ENCODE measurements at regions of chr9 and their contacts with region 1.

Region 1: DNA sequence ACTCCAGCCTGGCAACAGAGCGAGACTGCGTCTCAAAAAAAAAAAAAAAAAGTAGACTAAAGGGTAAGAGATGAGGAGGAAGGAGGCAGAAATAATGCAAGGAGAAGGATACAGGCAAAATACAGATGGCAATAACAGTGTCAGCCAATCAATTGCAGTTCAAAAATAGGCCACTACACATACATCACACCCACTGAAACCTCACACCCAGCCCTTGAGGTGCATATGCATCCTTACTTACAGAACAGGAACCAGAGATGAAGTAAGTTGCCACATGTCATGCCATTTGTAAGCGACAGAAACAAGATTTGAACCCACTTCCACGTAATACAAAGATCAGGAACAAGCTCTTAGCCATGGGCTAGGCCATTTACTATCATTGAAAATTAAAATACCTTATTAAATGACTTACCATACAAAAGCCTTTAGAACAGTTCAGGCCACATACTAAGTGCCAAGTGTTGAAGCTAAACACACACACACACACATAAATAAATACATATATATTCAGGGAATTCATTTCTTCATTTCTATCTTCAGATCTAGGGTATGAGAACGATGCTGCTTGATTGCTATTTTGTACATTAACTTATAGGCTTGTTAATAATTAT is 98.4 kb downstream of the FNBP1 start:
- DNase-seq: peak; percentile 70 to 83 (median 80)
- H3K4me3 ChIP-seq: no peak overlapping the region
- H3K4me3 Mint-ChIP-seq: peak overlapping the region; percentile 33 to 80 (median 52)
- H3K27ac ChIP-seq: peak overlapping the region; percentile 60
- H3K27ac Mint-ChIP-seq: peak overlapping the region; percentile 35 to 92 (median 85)
- H3K4me1 ChIP-seq: peaks cover 59% of the 10 kb centered on the region
- H3K4me1 Mint-ChIP-seq: peaks cover 35 to 70% (median 50%) of the 10 kb centered on the region in 4 donors
- H3K27me3 ChIP-seq: no peaks in the 10 kb centered on the region
- H3K27me3 Mint-ChIP-seq: no peaks in the 10 kb centered on the region

Region 2: GRCh38 chr9:129202613-129203555 is 741.7 kb before region 1 on chr9:
- CTCF ChIA-PET with region 1: no interaction called
- POLR2A ChIA-PET with region 1: no interaction called
- intact Hi-C with region 1: no loop called
- DNase-seq: peak; percentile 87 to 93 (median 89)
- H3K4me3 ChIP-seq: peak overlapping the region in 1 of 2 donors; percentile 51
- H3K4me3 Mint-ChIP-seq: peak overlapping the region; percentile 63 to 76 (median 72)
- H3K27ac ChIP-seq: peak overlapping the region; percentile 61
- H3K27ac Mint-ChIP-seq: peak overlapping the region; percentile 50 to 92 (median 80)
- H3K4me1 ChIP-seq: peaks cover 22% of the 10 kb centered on the region
- H3K4me1 Mint-ChIP-seq: peaks cover 9 to 20% (median 14%) of the 10 kb centered on the region in 4 donors
- H3K27me3 ChIP-seq: no peaks in the 10 kb centered on the region
- H3K27me3 Mint-ChIP-seq: peaks cover 0 to 2% of the 10 kb centered on the region in 2 donors

Region 3: DNA sequence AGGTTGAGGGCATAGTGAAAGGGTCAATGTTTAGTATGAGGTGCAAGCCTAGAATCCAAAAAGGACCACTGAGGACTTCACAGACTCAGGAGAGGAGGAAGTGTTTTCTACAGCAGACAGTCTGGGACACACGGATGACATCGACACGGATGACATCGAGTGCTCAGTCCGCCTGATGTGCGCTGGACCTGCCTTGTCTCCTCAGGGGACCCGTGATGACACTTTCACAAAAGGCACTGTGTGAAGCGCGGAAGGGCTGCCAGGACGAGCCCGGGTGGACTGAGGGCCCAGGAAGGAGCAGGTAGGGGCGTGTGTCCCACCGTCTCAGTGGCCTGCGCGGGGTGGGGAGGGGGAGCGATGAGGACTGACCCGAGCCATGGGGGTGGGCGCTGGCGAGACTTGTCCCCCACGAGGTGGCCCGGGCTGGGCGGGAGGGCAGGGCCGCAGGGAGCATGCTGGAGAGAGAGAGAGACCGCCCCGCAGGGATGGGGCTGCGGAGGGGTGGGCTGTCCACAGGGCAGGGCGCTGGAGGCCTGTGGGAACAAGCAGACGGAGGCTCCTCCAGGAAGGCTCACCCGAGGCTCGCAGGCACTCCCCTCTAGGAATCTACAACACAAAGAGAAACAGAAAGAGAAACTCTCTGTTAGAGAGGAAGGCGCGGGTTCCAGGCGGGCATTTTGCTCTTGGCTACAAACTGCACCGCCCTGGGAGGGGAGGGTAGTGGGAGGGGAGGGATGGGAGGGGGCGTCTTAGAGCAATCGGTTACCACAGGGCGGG is 54.5 kb before region 1 on chr9:
- CTCF ChIA-PET with region 1: interaction called, 4 read pairs
- POLR2A ChIA-PET with region 1: interaction called, 67 read pairs
- intact Hi-C with region 1: loop called (anchors 2 kb)
- DNase-seq: peak; percentile 63 to 87 (median 71)
- H3K4me3 ChIP-seq: peak overlapping the region; percentile 12 to 42
- H3K4me3 Mint-ChIP-seq: peak overlapping the region; percentile 87 to 98 (median 94)
- H3K27ac ChIP-seq: peak overlapping the region; percentile 98
- H3K27ac Mint-ChIP-seq: peak overlapping the region; percentile 99 to 100 (median 100)
- H3K4me1 ChIP-seq: peaks cover 91% of the 10 kb centered on the region
- H3K4me1 Mint-ChIP-seq: peaks cover 50 to 98% (median 69%) of the 10 kb centered on the region in 4 donors
- H3K27me3 ChIP-seq: no peaks in the 10 kb centered on the region
- H3K27me3 Mint-ChIP-seq: no peaks in the 10 kb centered on the region

Region 4: DNA sequence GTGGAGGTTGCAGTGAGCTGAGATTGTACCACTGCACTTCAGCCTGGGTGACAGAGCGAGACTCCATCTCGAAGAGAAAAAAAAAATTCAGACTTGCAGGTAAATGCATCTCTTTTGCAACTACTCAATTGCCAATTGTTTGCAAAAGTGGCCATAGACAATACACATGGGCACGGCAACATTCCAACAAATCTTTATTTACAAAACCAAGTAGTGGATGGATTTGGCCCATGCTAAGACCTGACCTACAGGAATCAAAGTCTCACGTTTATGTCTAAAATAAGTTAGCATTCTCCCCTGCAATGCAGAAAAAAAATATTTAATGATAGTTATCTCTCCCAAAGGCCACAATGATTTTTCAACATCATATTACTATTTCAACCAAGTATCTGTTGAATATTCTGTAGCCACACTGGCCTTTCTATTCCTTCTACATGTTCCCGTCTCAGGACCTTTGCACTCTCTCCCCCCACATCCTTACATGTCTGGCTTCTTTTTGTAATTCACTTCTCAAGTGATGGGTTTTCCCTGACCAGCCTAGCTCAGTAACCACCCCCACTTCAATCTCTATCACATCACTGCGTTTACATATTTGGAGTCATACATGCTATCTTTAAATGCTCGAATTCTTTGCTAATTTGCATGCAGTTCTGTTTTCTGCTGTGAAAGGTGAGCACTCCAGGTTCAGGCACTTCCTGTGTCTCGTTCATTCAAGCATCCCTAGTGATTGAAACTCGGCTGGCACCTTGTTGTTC is 44.2 kb after region 1 on chr9:
- CTCF ChIA-PET with region 1: no interaction called
- POLR2A ChIA-PET with region 1: interaction called, 10 read pairs
- intact Hi-C with region 1: no loop called
- DNase-seq: peak in 3 of 5 donors; percentile 26 to 67 (median 33)
- H3K4me3 ChIP-seq: peak overlapping the region in 1 of 2 donors; percentile 36
- H3K4me3 Mint-ChIP-seq: peak overlapping the region in 7 of 8 donors; percentile 23 to 71 (median 44)
- H3K27ac ChIP-seq: peak overlapping the region; percentile 73
- H3K27ac Mint-ChIP-seq: peak overlapping the region; percentile 78 to 94 (median 92)
- H3K4me1 ChIP-seq: peaks cover 75% of the 10 kb centered on the region
- H3K4me1 Mint-ChIP-seq: peaks cover 45 to 83% (median 64%) of the 10 kb centered on the region in 4 donors
- H3K27me3 ChIP-seq: no peaks in the 10 kb centered on the region
- H3K27me3 Mint-ChIP-seq: no peaks in the 10 kb centered on the region

Region 5: GRCh38 chr9:129995409-129996160 is 51.0 kb after region 1 on chr9:
- CTCF ChIA-PET with region 1: interaction called, 3 read pairs
- POLR2A ChIA-PET with region 1: interaction called, 13 read pairs
- intact Hi-C with region 1: no loop called
- DNase-seq: peak in 2 of 5 donors; percentile 20 to 59
- H3K4me3 ChIP-seq: peak overlapping the region in 1 of 2 donors; percentile 15
- H3K4me3 Mint-ChIP-seq: peak overlapping the region; percentile 66 to 82 (median 76)
- H3K27ac ChIP-seq: peak overlapping the region; percentile 64
- H3K27ac Mint-ChIP-seq: peak overlapping the region; percentile 93 to 98 (median 96)
- H3K4me1 ChIP-seq: peaks cover 79% of the 10 kb centered on the region
- H3K4me1 Mint-ChIP-seq: peaks cover 55 to 87% (median 71%) of the 10 kb centered on the region in 4 donors
- H3K27me3 ChIP-seq: no peaks in the 10 kb centered on the region
- H3K27me3 Mint-ChIP-seq: no peaks in the 10 kb centered on the region

Measured in CD4-positive, alpha-beta memory T cell (primary cell).